Dorsolateral prefrontal cortex (tissue), 120 donors: ENCODE measurements at regions of chr10 and their contacts with region 1.

Region 1: GRCh38 chr10:89217057-89217990 is 10.2 kb upstream of the CH25H start:
- DNase-seq: peak in 4 of 10 donors; percentile 50 to 73 (median 67)
- H3K4me3 ChIP-seq: peak overlapping the region in 19 of 59 donors; percentile 1 to 34 (median 16)
- H3K27ac ChIP-seq: peak overlapping the region in 58 of 59 donors; percentile 21 to 99 (median 90)
- H3K27me3 ChIP-seq: no peaks in the 10 kb centered on the region
- CTCF ChIP-seq: peak; percentile 78 to 99 (median 88)

Region 2: GRCh38 chr10:88932539-88933256 is 284.6 kb before region 1 on chr10:
- intact Hi-C with region 1: loop called in 1 of 2 experiments (anchors 5 kb)
- DNase-seq: peak in 5 of 10 donors; percentile 26 to 65 (median 46)
- H3K4me3 ChIP-seq: no peak overlapping the region
- H3K27ac ChIP-seq: peak overlapping the region in 51 of 59 donors; percentile 8 to 82 (median 66)
- H3K27me3 ChIP-seq: no peaks in the 10 kb centered on the region
- CTCF ChIP-seq: peak; percentile 65 to 96 (median 91)

Region 3: DNA sequence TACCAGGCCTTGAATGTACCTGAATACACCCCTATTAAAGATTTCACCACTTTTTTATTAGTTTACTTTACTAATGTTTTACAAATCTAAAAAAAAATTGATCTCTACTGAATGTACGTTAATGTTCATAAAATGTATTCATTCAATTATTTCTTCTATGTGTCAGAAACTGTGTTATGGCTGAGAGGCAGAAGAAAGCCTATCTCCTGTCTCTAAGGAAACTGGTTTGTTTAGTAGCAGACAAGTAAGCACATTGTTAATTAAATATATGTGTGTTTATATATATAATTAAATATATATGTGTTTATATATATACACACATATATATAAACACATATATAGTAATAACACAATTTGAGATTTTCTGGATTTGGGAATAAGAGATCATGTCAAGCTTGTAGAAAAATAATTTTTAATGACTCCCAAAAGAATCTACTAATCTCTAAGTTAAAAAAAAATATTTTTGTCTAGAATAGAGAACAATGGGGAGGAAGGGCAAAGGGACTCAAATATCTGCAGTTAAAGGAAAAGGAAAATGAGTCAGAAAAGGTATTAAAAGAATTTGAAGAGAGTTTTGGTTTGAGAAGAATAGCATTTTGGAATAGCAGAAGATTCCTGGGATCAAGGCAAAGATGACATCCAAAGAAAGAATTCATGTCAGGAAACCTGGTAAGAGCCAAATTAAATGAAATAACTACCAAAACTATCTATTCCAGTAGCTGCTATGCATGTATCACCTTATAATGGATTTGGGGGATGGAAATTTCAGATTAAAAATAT is 102.3 kb before region 1 on chr10:
- intact Hi-C with region 1: no loop called
- DNase-seq: no peak
- H3K4me3 ChIP-seq: no peak overlapping the region
- H3K27ac ChIP-seq: no peak overlapping the region
- H3K27me3 ChIP-seq: peaks cover 0 to 4% (median 0%) of the 10 kb centered on the region in 45 donors
- CTCF ChIP-seq: no peak

Region 4: DNA sequence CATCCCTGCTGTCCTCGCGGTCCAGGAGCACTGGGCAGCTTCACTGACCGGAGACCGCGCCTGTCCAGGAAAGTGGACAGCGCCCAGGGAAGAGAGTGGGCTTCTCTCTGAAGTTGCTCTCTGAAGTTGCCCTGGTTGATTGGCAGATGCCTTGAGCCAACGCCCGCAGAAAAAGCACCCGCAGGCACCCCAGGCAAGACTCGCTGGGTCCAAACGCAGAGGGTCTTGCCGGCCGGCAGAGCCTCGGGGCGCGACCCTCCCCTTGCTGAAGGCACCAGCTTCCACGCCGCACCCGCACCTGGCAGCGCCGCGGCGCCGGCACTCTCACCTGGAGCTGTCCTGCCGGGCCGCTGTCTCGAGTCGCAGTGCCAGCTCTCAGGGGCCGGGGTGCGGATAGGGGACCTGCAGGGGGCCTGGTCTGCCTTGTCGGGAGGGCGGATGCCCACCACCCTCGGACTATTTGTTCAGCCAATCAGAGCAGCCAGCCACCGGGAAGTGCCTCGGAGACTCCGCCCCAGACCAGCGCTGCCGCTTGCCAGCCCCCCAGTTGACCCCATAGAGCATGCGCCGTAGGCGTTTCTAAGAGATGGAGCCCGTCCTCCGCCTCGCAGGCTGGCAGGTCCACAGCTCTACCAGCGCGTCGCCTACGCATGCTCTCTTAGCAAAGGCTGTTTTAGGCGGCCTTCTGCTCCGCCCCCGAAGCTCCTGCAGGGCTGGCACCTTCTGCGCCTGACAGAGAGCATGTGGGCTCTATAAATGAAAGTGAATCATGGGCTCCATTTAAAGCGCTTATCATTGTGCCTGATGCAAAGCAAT is 34.3 kb after region 1 on chr10 and contains the start of gene LIPA:
- intact Hi-C with region 1: loop called (anchors 5 kb)
- DNase-seq: peak; percentile 93 to 98 (median 96)
- H3K4me3 ChIP-seq: peak within 1 kb of the TSS; percentile 73 to 100 (median 95)
- H3K27ac ChIP-seq: peak within 1 kb of the TSS; percentile 79 to 99 (median 94)
- H3K27me3 ChIP-seq: no peaks in the 10 kb centered on the region
- CTCF ChIP-seq: peak in 38 of 56 donors; percentile 6 to 57 (median 33)
- total RNA-seq, gene LIPA: 39.5 to 269 (median 82.3) TPM

Region 5: GRCh38 chr10:89414146-89414878 is 197.0 kb after region 1 on chr10 and contains the start of gene IFIT5:
- intact Hi-C with region 1: loop called in 1 of 2 experiments (anchors 5 kb)
- DNase-seq: peak; percentile 63 to 85 (median 72)
- H3K4me3 ChIP-seq: peak within 1 kb of the TSS; percentile 62 to 98 (median 87)
- H3K27ac ChIP-seq: peak within 1 kb of the TSS; percentile 80 to 99 (median 97)
- H3K27me3 ChIP-seq: no peaks in the 10 kb centered on the region
- CTCF ChIP-seq: peak in 20 of 56 donors; percentile 2 to 47 (median 24)
- total RNA-seq, gene IFIT5: 10.6 to 33.5 (median 19.0) TPM